ENCODE measurements at regions of chr2 and their contacts with region 1.

Region 1: GRCh38 chr2:16682431-16683118 is 16.9 kb upstream of the CYRIA start:
- H3K4me3 Mint-ChIP-seq: no peak overlapping the region
- H3K27ac Mint-ChIP-seq: no peak overlapping the region
- H3K4me1 Mint-ChIP-seq: peaks cover 49% of the 10 kb centered on the region
- H3K27me3 Mint-ChIP-seq: no peaks in the 10 kb centered on the region

Region 2: GRCh38 chr2:16635791-16636699 is 46.5 kb before region 1 on chr2:
- intact Hi-C with region 1: loop called (anchors 10 kb)
- H3K4me3 Mint-ChIP-seq: no peak overlapping the region
- H3K27ac Mint-ChIP-seq: peak overlapping the region; percentile 69
- H3K4me1 Mint-ChIP-seq: peaks cover 97% of the 10 kb centered on the region
- H3K27me3 Mint-ChIP-seq: no peaks in the 10 kb centered on the region

Region 3: GRCh38 chr2:16665748-16666448 is 16.7 kb before region 1 on chr2 and contains the start of gene CYRIA:
- intact Hi-C with region 1: loop called (anchors 2 kb)
- H3K4me3 Mint-ChIP-seq: peak within 1 kb of the TSS; percentile 94
- H3K27ac Mint-ChIP-seq: peak within 1 kb of the TSS; percentile 88
- H3K4me1 Mint-ChIP-seq: peaks cover 65% of the 10 kb centered on the region
- H3K27me3 Mint-ChIP-seq: peaks cover 11% of the 10 kb centered on the region

Region 4: GRCh38 chr2:16713011-16713423 is 30.4 kb after region 1 on chr2:
- intact Hi-C with region 1: no loop called
- H3K4me3 Mint-ChIP-seq: no peak overlapping the region
- H3K27ac Mint-ChIP-seq: no peak overlapping the region
- H3K4me1 Mint-ChIP-seq: peaks cover 55% of the 10 kb centered on the region
- H3K27me3 Mint-ChIP-seq: no peaks in the 10 kb centered on the region

Region 5: DNA sequence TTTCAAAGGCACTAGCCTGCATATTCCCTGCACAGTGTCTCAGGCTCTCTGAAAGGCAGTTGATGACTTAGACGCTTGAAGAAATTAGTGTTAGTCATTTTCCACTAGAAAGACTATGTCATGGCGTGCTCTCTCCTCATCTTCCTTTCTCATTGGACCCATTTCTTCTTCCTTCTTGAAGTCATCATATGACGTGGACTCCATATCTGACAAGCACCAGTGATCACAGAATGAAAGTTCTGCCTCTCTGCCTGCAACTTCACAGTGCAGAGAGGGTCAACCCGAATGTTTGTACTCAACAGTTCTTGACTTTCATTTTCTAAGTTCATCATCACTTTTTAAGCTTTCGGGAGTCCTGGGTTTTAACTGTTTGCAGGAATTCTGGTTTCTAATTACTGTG is 46.8 kb after region 1 on chr2:
- intact Hi-C with region 1: no loop called
- H3K4me3 Mint-ChIP-seq: no peak overlapping the region
- H3K27ac Mint-ChIP-seq: no peak overlapping the region
- H3K4me1 Mint-ChIP-seq: peaks cover 10% of the 10 kb centered on the region
- H3K27me3 Mint-ChIP-seq: peaks cover 3% of the 10 kb centered on the region

Region 6: GRCh38 chr2:16745466-16745865 is 62.9 kb after region 1 on chr2:
- intact Hi-C with region 1: loop called (anchors 10 kb)
- H3K4me3 Mint-ChIP-seq: no peak overlapping the region
- H3K27ac Mint-ChIP-seq: peak overlapping the region; percentile 42
- H3K4me1 Mint-ChIP-seq: peaks cover 53% of the 10 kb centered on the region
- H3K27me3 Mint-ChIP-seq: peaks cover 12% of the 10 kb centered on the region

Region 7: GRCh38 chr2:16784652-16785051 is 102.1 kb after region 1 on chr2:
- intact Hi-C with region 1: no loop called
- H3K4me3 Mint-ChIP-seq: no peak overlapping the region
- H3K27ac Mint-ChIP-seq: no peak overlapping the region
- H3K4me1 Mint-ChIP-seq: no peaks in the 10 kb centered on the region
- H3K27me3 Mint-ChIP-seq: no peaks in the 10 kb centered on the region

Region 8: DNA sequence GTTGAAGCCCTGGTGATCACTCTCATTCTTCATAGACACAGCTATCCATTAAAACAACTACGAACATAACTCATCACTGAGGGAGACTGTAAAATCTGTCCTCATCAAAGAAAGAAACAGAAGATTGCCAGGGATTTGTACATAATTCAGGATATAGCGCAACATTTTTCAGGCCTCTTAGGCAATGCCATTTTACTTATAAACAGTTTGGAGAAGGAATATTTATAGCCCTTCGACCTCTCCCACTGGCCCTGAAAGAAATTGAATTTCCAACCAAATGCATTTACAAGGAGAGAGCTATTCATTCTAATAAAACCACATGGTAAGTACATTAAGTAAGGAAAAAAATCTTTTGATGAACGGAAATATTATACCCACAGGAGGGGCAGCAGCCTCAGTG is 540.6 kb after region 1 on chr2:
- intact Hi-C with region 1: no loop called
- H3K4me3 Mint-ChIP-seq: no peak overlapping the region
- H3K27ac Mint-ChIP-seq: no peak overlapping the region
- H3K4me1 Mint-ChIP-seq: no peaks in the 10 kb centered on the region
- H3K27me3 Mint-ChIP-seq: no peaks in the 10 kb centered on the region